Upper lobe of right lung (tissue), 1 donor: ENCODE measurements at regions of chr5 and their contacts with region 1.

Region 1: DNA sequence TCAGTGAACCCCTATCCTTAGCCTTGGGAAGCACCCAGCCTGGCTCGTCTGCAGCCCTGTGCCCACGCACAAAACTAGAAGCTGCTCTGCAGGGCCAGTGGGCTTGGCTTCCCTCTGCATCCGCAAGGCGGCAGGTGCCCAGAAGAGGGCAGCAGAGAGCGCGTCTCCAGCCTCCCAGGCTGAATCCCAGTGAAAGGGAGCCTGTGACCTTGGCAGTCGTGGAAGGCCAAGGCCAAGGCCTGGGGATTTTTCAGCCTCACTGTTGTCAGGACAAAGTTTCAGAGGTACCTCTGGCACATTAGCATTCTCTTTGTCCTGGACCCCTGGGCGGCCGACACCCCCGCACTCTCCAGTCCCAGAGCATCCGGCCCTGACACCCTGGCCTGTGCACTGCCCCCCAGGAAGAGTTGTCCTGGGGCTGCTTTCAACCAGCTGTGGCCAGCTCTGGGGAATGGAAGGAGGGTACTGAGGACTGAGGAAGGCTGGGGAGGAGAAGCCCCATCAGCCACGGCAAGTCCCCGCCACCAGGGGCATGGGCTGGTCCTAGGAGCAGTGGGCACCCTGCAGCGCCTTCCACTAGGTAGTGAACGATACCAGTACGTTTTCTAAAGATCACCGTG is 63.6 kb upstream of the IL17B start:
- DNase-seq: peak; percentile 91
- ATAC-seq: peak; percentile 95
- H3K4me3 ChIP-seq: no peak overlapping the region
- H3K27ac ChIP-seq: peak overlapping the region; percentile 66
- H3K4me1 ChIP-seq: peaks cover 14% of the 10 kb centered on the region
- H3K27me3 ChIP-seq: no peaks in the 10 kb centered on the region
- CTCF ChIP-seq: peak; percentile 91

Region 2: GRCh38 chr5:149367249-149367971 is 75.3 kb before region 1 on chr5:
- intact Hi-C with region 1: no loop called
- DNase-seq: no peak
- ATAC-seq: peak; percentile 70
- H3K4me3 ChIP-seq: no peak overlapping the region
- H3K27ac ChIP-seq: no peak overlapping the region
- H3K4me1 ChIP-seq: no peaks in the 10 kb centered on the region
- H3K27me3 ChIP-seq: no peaks in the 10 kb centered on the region
- CTCF ChIP-seq: peak; percentile 82

Region 3: DNA sequence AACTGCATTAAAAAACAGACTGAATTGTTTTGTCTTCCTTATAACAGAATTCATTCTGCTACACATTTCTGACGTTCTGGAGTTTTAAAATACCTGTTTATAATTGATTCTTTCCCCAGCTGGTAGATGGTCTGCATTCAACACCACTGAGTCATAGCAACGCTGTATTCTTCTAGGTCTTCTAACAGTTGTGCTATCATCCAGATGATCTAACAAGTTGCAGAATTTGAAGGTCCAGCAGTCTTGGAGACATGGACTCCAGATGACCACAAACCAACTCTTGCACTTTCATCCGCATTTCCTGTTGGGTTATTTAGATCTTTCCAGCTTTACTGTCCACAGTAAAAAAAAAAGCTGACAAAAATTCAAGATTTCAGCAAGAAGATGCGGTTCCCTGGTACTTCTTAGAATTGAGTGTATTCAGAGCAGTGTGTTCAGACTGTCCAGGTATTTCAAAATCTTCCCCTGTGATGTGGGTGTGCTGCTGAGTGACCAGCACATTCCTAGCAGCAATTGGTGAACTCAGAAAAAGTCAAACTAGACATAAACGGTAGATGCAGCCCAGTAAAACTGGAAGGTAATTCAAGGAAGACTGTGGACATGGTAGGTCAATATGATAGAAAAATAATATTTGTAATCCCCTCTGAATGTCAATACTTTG is 58.4 kb after region 1 on chr5:
- intact Hi-C with region 1: loop called (anchors 10 kb)
- DNase-seq: no peak
- ATAC-seq: peak; percentile 36
- H3K4me3 ChIP-seq: no peak overlapping the region
- H3K27ac ChIP-seq: no peak overlapping the region
- H3K4me1 ChIP-seq: no peaks in the 10 kb centered on the region
- H3K27me3 ChIP-seq: no peaks in the 10 kb centered on the region
- CTCF ChIP-seq: no peak

Region 4: DNA sequence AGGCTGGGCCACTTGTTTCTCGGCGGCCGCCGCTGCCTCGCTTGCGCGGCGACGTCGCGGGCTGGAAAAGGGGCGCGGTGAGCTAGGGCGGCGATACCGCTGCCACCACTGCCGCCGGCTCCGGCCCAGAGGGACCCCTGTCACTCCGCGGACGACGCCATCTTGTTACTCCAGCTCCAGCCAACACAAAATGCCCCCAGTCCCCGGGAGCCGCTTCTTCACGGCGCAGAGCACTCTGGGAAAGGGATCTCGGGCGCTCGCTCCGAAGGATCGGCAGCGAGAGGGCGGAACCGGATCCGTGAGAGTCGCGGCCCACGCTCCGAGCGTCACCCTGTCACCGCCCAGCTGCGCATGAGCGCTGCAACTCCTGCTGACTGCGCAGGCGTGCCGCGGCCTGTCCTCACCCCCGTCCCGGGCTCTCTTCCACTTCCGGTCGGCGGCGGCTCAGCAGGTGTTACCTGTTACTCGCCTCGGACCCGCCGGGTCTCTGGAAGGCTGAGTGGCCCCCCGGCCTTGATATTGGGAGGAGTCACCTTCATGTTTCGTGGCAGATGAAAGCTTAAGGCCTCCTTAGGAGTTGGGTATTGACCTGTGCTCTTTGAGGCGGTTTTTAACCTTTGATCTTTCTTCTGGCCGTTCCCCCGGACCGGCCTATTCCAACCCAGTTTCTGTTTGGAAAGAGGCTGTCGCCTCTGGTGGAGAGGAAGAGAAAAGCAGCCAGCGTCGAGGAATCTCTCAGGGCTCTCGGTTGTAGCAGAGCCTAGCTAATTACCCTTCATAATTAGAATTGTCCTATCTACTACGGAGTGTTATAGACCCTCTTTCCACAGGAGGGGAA is 108.7 kb after region 1 on chr5 and contains the start of gene CSNK1A1:
- intact Hi-C with region 1: loop called (anchors 5 kb)
- DNase-seq: peak; percentile 100
- ATAC-seq: peak; percentile 97
- H3K4me3 ChIP-seq: peak within 1 kb of the TSS; percentile 99
- H3K27ac ChIP-seq: peak within 1 kb of the TSS; percentile 99
- H3K4me1 ChIP-seq: peaks cover 33% of the 10 kb centered on the region
- H3K27me3 ChIP-seq: no peaks in the 10 kb centered on the region
- CTCF ChIP-seq: peak; percentile 79
- total RNA-seq, gene CSNK1A1: 191 TPM